Sciatic nerve (tissue), 2 donors: ENCODE measurements at regions of chr12 and their contacts with region 1.

Region 1: GRCh38 chr12:129351481-129351880 is 498.2 kb downstream of the GLT1D1 start:
- DNase-seq: no peak
- ATAC-seq: no peak

Region 2: GRCh38 chr12:128365651-128366231 is 985.7 kb before region 1 on chr12:
- intact Hi-C with region 1: loop called (anchors 10 kb)
- DNase-seq: no peak
- ATAC-seq: peak; percentile 85